ENCODE measurements at regions of chr2 and their contacts with region 1.

Region 1: GRCh38 chr2:86825693-86826381 is 35.1 kb upstream of the CD8A start:
- DNase-seq: peak; percentile 93
- ATAC-seq: peak; percentile 78
- H3K4me3 Mint-ChIP-seq: peak overlapping the region; percentile 80
- H3K27ac Mint-ChIP-seq: peak overlapping the region; percentile 94
- H3K4me1 Mint-ChIP-seq: peaks cover 80% of the 10 kb centered on the region
- H3K27me3 Mint-ChIP-seq: no peaks in the 10 kb centered on the region

Region 2: DNA sequence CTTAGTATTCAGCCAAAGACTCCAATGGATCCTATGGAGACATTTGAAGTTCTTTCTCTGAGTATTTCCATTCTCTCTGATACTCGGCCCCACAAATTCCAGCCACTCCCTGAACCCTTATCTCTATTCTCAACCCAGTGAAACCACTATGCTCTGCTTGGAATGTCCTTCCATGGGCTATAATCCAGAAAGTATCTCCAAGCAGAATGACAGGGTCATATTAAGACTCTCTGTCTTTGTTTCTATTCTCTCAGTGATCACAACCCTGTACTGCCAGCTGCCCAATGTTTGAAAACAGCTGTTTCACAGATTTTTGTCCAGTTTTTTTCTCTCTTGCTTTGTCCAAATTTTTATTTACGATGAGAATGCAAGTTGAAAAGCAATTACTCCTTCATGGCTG is 284.5 kb before region 1 on chr2:
- CTCF ChIA-PET with region 1: no interaction called
- POLR2A ChIA-PET with region 1: no interaction called
- DNase-seq: no peak
- ATAC-seq: no peak
- H3K4me3 Mint-ChIP-seq: no peak overlapping the region
- H3K27ac Mint-ChIP-seq: no peak overlapping the region
- H3K4me1 Mint-ChIP-seq: no peaks in the 10 kb centered on the region
- H3K27me3 Mint-ChIP-seq: no peaks in the 10 kb centered on the region

Region 3: GRCh38 chr2:86783615-86784339 is 42.1 kb before region 1 on chr2:
- CTCF ChIA-PET with region 1: interaction called, 3 read pairs
- POLR2A ChIA-PET with region 1: interaction called, 61 read pairs
- DNase-seq: no peak
- ATAC-seq: no peak
- H3K4me3 Mint-ChIP-seq: no peak overlapping the region
- H3K27ac Mint-ChIP-seq: peak overlapping the region; percentile 99
- H3K4me1 Mint-ChIP-seq: peaks cover 63% of the 10 kb centered on the region
- H3K27me3 Mint-ChIP-seq: no peaks in the 10 kb centered on the region

Region 4: GRCh38 chr2:86790676-86791572 is 34.9 kb before region 1 on chr2 and contains the start of gene CD8A:
- CTCF ChIA-PET with region 1: interaction called, 5 read pairs
- POLR2A ChIA-PET with region 1: interaction called, 61 read pairs
- DNase-seq: peak; percentile 91
- ATAC-seq: peak; percentile 41
- H3K4me3 Mint-ChIP-seq: peak within 1 kb of the TSS; percentile 95
- H3K27ac Mint-ChIP-seq: peak within 1 kb of the TSS; percentile 99
- H3K4me1 Mint-ChIP-seq: peaks cover 63% of the 10 kb centered on the region
- H3K27me3 Mint-ChIP-seq: no peaks in the 10 kb centered on the region
- total RNA-seq, gene CD8A: 667 to 675 TPM

Region 5: GRCh38 chr2:86808315-86809161 is 17.3 kb before region 1 on chr2:
- CTCF ChIA-PET with region 1: interaction called, 82 read pairs
- POLR2A ChIA-PET with region 1: interaction called, 218 read pairs
- DNase-seq: peak; percentile 98
- ATAC-seq: peak; percentile 73
- H3K4me3 Mint-ChIP-seq: peak overlapping the region; percentile 93
- H3K27ac Mint-ChIP-seq: peak overlapping the region; percentile 94
- H3K4me1 Mint-ChIP-seq: peaks cover 50% of the 10 kb centered on the region
- H3K27me3 Mint-ChIP-seq: no peaks in the 10 kb centered on the region